Natural killer cell (primary cell): ENCODE measurements at regions of chr17 and their contacts with region 1.

Region 1: DNA sequence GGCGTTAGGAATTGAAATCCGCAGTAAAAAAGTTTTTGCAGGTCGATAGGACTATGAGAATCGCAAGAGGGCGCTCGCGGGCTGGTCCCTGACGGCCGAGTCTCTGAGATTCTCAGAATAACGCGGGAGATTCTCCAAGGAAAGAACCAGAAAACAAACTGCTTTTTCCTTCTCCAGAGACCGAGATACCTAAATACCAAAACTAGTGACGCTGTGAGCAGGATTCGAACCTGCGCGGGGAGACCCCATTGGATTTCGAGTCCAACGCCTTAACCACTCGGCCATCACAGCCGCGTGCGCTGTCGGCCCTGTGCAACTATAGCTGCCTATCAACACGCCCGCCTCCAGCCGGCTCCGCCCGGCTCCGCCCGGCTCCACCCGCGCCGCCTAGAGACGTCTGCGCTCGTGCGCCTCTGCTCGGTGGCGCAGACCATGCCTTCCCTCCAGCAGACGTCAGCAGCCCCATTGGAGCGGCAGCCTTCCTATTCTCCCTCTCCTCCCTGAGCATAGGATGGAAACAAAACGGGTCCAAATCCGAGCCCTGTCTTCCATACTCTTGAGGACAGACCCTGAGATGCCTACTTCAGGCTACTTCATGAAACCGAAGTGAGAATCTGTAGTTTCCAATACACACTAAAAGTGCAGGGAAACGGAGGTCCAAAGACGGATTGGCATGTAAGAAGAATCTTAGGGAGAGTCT is 13.4 kb downstream of the PER1 start:
- DNase-seq: peak; percentile 96 to 98
- ATAC-seq: peak; percentile 83 to 96 (median 85)
- H3K4me3 ChIP-seq: peak overlapping the region; percentile 65
- H3K4me3 Mint-ChIP-seq: no peak overlapping the region
- H3K27ac ChIP-seq: peak overlapping the region; percentile 96
- H3K27ac Mint-ChIP-seq: no peak overlapping the region
- H3K4me1 ChIP-seq: peaks cover 28% of the 10 kb centered on the region
- H3K4me1 Mint-ChIP-seq: peaks cover 0 to 3% of the 10 kb centered on the region in 2 donors
- H3K27me3 ChIP-seq: no peaks in the 10 kb centered on the region
- H3K27me3 Mint-ChIP-seq: no peaks in the 10 kb centered on the region
- CTCF ChIP-seq: peak; percentile 93

Region 2: GRCh38 chr17:7234083-7234951 is 904.5 kb before region 1 on chr17 and contains the start of gene DVL2:
- intact Hi-C with region 1: loop called (anchors 5 kb)
- DNase-seq: peak; percentile 92 to 97
- ATAC-seq: peak; percentile 55 to 77 (median 73)
- H3K4me3 ChIP-seq: peak within 1 kb of the TSS; percentile 90
- H3K4me3 Mint-ChIP-seq: peak within 1 kb of the TSS; percentile 88
- H3K27ac ChIP-seq: peak within 1 kb of the TSS; percentile 63
- H3K27ac Mint-ChIP-seq: peak within 1 kb of the TSS; percentile 92 to 97
- H3K4me1 ChIP-seq: peaks cover 37% of the 10 kb centered on the region
- H3K4me1 Mint-ChIP-seq: peaks cover 40 to 69% of the 10 kb centered on the region in 2 donors
- H3K27me3 ChIP-seq: no peaks in the 10 kb centered on the region
- H3K27me3 Mint-ChIP-seq: no peaks in the 10 kb centered on the region
- CTCF ChIP-seq: no peak
- total RNA-seq, gene DVL2: 46.5 to 66.6 (median 61.5) TPM

Region 3: DNA sequence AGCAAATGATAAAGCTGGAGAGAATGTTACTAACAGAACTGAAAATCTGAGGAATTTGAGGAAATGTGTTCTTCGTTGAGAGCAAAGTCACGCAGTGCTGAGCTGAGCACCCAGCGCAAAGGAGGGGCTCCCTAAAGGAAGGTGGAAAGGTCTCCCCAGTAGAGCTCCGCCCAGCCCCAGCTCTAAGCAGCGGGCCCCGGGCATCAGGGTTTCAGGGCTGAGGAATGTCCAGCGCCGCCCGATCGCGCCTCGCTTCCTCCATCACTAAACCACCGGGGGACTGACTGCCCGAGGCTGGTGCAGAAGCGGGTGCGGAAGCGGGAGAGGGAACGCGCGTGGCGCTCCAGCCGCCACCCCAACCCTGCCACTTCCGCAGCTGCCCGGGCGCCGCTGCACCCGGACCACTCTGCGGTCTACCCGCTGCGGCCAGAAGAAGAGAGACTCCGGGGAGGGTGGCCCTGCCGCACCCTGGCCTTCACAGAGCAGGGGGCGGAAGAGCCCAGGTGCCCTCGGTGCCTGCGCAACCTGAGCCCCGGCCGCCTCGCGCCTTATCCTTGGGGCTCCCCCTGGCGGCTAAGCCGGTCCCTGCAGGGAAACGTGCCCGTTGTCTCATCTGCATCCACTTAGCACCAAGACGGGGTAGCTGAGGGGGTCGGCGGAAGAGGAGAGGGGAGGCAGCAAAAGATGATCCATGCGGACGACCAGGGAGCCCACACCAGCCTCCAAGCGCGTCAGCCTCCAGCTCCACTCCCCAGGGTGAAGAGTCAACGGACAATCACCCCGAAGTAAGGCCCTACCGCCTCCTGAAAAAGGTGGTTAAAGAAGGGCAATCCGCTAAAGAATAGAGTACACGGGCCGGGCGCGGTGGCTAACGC is 148.8 kb before region 1 on chr17:
- intact Hi-C with region 1: no loop called
- DNase-seq: peak; percentile 94
- ATAC-seq: peak; percentile 89 to 93 (median 91)
- H3K4me3 ChIP-seq: peak overlapping the region; percentile 37
- H3K4me3 Mint-ChIP-seq: peak overlapping the region; percentile 89
- H3K27ac ChIP-seq: peak overlapping the region; percentile 48
- H3K27ac Mint-ChIP-seq: peak overlapping the region; percentile 83 to 91
- H3K4me1 ChIP-seq: peaks cover 16% of the 10 kb centered on the region
- H3K4me1 Mint-ChIP-seq: peaks cover 22 to 25% of the 10 kb centered on the region in 2 donors
- H3K27me3 ChIP-seq: no peaks in the 10 kb centered on the region
- H3K27me3 Mint-ChIP-seq: peaks cover 9 to 11% of the 10 kb centered on the region in 2 donors
- CTCF ChIP-seq: peak; percentile 90

Region 4: GRCh38 chr17:8118769-8119580 is 19.8 kb before region 1 on chr17:
- intact Hi-C with region 1: loop called (anchors 1 kb)
- DNase-seq: peak; percentile 84 to 90
- ATAC-seq: peak; percentile 62 to 79 (median 68)
- H3K4me3 ChIP-seq: peak overlapping the region; percentile 91
- H3K4me3 Mint-ChIP-seq: peak overlapping the region; percentile 93
- H3K27ac ChIP-seq: peak overlapping the region; percentile 76
- H3K27ac Mint-ChIP-seq: peak overlapping the region; percentile 98 to 100
- H3K4me1 ChIP-seq: peaks cover 57% of the 10 kb centered on the region
- H3K4me1 Mint-ChIP-seq: peaks cover 55 to 56% of the 10 kb centered on the region in 2 donors
- H3K27me3 ChIP-seq: peaks cover 48% of the 10 kb centered on the region
- H3K27me3 Mint-ChIP-seq: peaks cover 51 to 55% of the 10 kb centered on the region in 2 donors
- CTCF ChIP-seq: peak; percentile 89

Region 5: GRCh38 chr17:8125157-8125946 is 13.5 kb before region 1 on chr17:
- intact Hi-C with region 1: loop called (anchors 1 kb)
- DNase-seq: peak; percentile 92
- ATAC-seq: peak; percentile 52 to 62 (median 60)
- H3K4me3 ChIP-seq: peak overlapping the region; percentile 57
- H3K4me3 Mint-ChIP-seq: peak overlapping the region; percentile 93
- H3K27ac ChIP-seq: no peak overlapping the region
- H3K27ac Mint-ChIP-seq: peak overlapping the region; percentile 95 to 98
- H3K4me1 ChIP-seq: peaks cover 65% of the 10 kb centered on the region
- H3K4me1 Mint-ChIP-seq: peaks cover 60 to 62% of the 10 kb centered on the region in 2 donors
- H3K27me3 ChIP-seq: peaks cover 33% of the 10 kb centered on the region
- H3K27me3 Mint-ChIP-seq: peaks cover 45 to 59% of the 10 kb centered on the region in 2 donors
- CTCF ChIP-seq: no peak

Region 6: GRCh38 chr17:8151123-8151640 is 12.4 kb after region 1 on chr17:
- intact Hi-C with region 1: loop called (anchors 1 kb)
- DNase-seq: peak; percentile 89 to 96
- ATAC-seq: peak; percentile 50 to 67 (median 62)
- H3K4me3 ChIP-seq: peak overlapping the region; percentile 53
- H3K4me3 Mint-ChIP-seq: peak overlapping the region; percentile 94
- H3K27ac ChIP-seq: peak overlapping the region; percentile 91
- H3K27ac Mint-ChIP-seq: no peak overlapping the region
- H3K4me1 ChIP-seq: peaks cover 68% of the 10 kb centered on the region
- H3K4me1 Mint-ChIP-seq: peaks cover 15 to 30% of the 10 kb centered on the region in 2 donors
- H3K27me3 ChIP-seq: no peaks in the 10 kb centered on the region
- H3K27me3 Mint-ChIP-seq: no peaks in the 10 kb centered on the region
- CTCF ChIP-seq: no peak

Region 7: DNA sequence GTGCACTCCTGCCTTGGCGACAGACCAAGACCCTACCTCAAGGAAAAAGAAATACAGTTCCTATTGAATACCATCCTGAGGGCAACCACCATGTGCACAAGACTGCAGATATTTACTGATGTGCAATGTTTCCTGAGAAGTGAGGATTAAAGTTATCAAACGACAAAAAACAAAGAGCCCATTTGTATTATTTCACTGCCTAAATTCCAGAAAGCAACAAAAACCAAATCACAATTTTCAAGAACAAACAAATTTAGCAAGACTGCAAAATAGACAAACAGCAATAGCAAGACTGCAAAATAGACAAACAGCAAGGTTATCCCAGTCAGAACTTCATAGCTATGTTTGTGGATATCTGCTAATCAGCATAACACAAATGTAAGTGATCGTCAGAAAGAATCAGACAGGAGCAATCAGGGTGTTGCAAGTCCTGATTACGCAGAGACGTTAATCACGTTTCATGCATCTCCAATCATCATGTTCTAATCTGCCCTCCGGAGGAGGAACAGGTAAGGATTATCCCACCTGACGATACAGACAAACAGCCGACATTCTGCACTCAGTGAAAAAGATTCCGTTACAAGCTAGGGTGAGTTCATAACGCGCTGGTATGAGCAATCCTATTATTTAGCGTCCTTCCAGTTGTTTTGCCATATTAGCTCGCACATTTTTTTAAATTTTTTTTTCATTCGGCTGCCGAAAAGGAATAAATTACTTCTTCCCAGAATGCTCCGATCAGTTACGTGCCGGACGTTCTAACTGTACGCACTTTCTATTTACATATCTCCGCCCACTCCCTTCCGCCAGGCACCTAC is 34.4 kb after region 1 on chr17:
- intact Hi-C with region 1: loop called (anchors 5 kb)
- DNase-seq: peak; percentile 57 to 96
- ATAC-seq: peak; percentile 81 to 92 (median 82)
- H3K4me3 ChIP-seq: peak overlapping the region; percentile 49
- H3K4me3 Mint-ChIP-seq: peak overlapping the region; percentile 90
- H3K27ac ChIP-seq: peak overlapping the region; percentile 98
- H3K27ac Mint-ChIP-seq: peak overlapping the region; percentile 99
- H3K4me1 ChIP-seq: peaks cover 47% of the 10 kb centered on the region
- H3K4me1 Mint-ChIP-seq: peaks cover 34 to 43% of the 10 kb centered on the region in 2 donors
- H3K27me3 ChIP-seq: no peaks in the 10 kb centered on the region
- H3K27me3 Mint-ChIP-seq: no peaks in the 10 kb centered on the region
- CTCF ChIP-seq: no peak

Region 8: GRCh38 chr17:8248751-8249607 is 110.2 kb after region 1 on chr17 and contains the start of gene PFAS:
- intact Hi-C with region 1: no loop called
- DNase-seq: peak; percentile 98 to 99
- ATAC-seq: peak; percentile 51 to 71 (median 63)
- H3K4me3 ChIP-seq: peak within 1 kb of the TSS; percentile 74
- H3K4me3 Mint-ChIP-seq: peak within 1 kb of the TSS; percentile 94
- H3K27ac ChIP-seq: peak within 1 kb of the TSS; percentile 99
- H3K27ac Mint-ChIP-seq: peak within 1 kb of the TSS; percentile 92 to 97
- H3K4me1 ChIP-seq: peaks cover 37% of the 10 kb centered on the region
- H3K4me1 Mint-ChIP-seq: peaks cover 33 to 51% of the 10 kb centered on the region in 2 donors
- H3K27me3 ChIP-seq: no peaks in the 10 kb centered on the region
- H3K27me3 Mint-ChIP-seq: no peaks in the 10 kb centered on the region
- CTCF ChIP-seq: no peak
- total RNA-seq, gene PFAS: 23.6 to 30.0 (median 24.0) TPM